Gastrocnemius medialis (tissue), 4 donors: ENCODE measurements at regions of chr18 and their contacts with region 1.

Region 1: DNA sequence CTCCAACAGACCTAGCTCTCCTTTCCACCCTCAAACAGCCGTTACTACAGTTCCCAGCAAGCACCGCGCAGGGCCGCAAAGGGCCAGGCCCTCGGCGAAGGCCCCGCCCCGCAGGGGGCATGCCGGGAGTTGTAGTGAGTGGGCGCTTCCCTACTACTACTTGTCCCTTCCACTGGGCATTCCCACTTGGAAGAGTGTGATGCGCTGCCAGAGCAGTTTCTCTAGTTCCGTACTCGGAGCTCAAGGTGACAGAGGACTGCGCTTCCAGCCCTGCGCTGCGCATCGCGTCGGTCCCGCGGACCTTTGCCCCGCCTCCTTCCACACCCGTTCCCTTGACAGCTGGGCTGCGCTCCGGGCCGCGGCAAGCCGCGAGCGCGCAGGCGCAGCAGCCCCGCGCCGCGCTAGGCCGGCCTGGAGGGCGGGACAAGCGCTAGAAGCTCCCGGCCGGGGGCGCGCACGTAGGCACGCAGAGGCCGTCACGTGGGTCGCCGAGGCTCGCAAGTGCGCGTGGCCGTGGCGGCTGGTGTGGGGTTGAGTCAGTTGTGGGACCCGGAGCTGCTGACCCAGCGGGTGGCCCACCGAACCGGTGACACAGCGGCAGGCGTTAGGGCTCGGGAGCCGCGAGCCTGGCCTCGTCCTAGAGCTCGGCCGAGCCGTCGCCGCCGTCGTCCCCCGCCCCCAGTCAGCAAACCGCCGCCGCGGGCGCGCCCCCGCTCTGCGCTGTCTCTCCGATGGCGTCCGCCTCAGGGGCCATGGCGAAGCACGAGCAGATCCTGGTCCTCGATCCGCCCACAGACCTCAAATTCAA is at the start of gene VAPA:
- DNase-seq: peak; percentile 91 to 94
- ATAC-seq: peak; percentile 84 to 87
- H3K4me3 ChIP-seq: peak within 1 kb of the TSS; percentile 68 to 95 (median 85)
- H3K27ac ChIP-seq: peak within 1 kb of the TSS; percentile 92 to 99 (median 97)
- H3K4me1 ChIP-seq: peaks cover 38 to 40% of the 10 kb centered on the region in 2 donors
- H3K27me3 ChIP-seq: no peaks in the 10 kb centered on the region
- CTCF ChIP-seq: no peak
- POLR2A ChIP-seq: peak; percentile 99
- total RNA-seq, gene VAPA: 227 to 320 (median 243) TPM

Region 2: GRCh38 chr18:9102508-9103375 is 811.0 kb before region 1 on chr18 and contains the start of gene NDUFV2:
- in situ Hi-C with region 1: no loop called
- intact Hi-C with region 1: loop called (anchors 2 kb)
- DNase-seq: peak; percentile 95 to 96
- ATAC-seq: peak; percentile 89 to 93
- H3K4me3 ChIP-seq: peak within 1 kb of the TSS; percentile 73 to 89 (median 82)
- H3K27ac ChIP-seq: peak within 1 kb of the TSS; percentile 93 to 98 (median 96)
- H3K4me1 ChIP-seq: peaks cover 42 to 47% of the 10 kb centered on the region in 2 donors
- H3K27me3 ChIP-seq: no peaks in the 10 kb centered on the region
- CTCF ChIP-seq: no peak
- POLR2A ChIP-seq: peak; percentile 92
- total RNA-seq, gene NDUFV2: 251 to 386 (median 277) TPM

Region 3: GRCh38 chr18:9474983-9475642 is 438.6 kb before region 1 on chr18 and contains the start of gene RALBP1:
- in situ Hi-C with region 1: no loop called
- intact Hi-C with region 1: loop called (anchors 10 kb)
- DNase-seq: peak; percentile 98 to 99
- ATAC-seq: peak; percentile 94 to 95
- H3K4me3 ChIP-seq: peak within 1 kb of the TSS; percentile 72 to 94 (median 88)
- H3K27ac ChIP-seq: peak within 1 kb of the TSS; percentile 84 to 98 (median 91)
- H3K4me1 ChIP-seq: peaks cover 13 to 21% of the 10 kb centered on the region in 2 donors
- H3K27me3 ChIP-seq: no peaks in the 10 kb centered on the region
- CTCF ChIP-seq: peak in 2 of 5 experiments; percentile 23 to 36
- POLR2A ChIP-seq: peak; percentile 74 to 94
- total RNA-seq, gene RALBP1: 41.5 to 108 (median 78.1) TPM

Region 4: DNA sequence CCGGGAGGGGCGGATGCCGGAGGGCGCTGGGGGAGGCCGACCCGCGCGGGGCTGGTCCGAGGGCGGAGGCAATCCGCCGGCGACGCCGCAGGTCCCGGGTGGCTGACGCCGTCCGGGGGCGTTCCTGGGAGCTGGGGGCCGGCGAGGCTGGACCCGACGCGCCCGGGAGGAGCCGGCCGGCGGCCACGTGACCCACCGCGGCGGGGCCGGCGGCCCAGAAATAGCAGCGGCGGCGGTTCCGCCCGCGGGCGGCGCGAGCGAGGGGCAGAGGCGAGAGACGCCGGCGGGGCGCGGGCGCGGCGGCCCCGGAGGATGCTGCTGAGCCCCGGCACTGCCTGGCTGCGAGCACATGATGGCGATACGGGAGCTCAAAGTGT is 205.7 kb before region 1 on chr18 and contains the start of gene RAB31:
- in situ Hi-C with region 1: no loop called
- intact Hi-C with region 1: loop called (anchors 5 kb)
- DNase-seq: peak in 1 of 2 donors; percentile 54
- ATAC-seq: peak; percentile 69 to 72
- H3K4me3 ChIP-seq: peak within 1 kb of the TSS; percentile 64 to 85 (median 71)
- H3K27ac ChIP-seq: peak within 1 kb of the TSS; percentile 63 to 85 (median 72)
- H3K4me1 ChIP-seq: peaks cover 8 to 9% of the 10 kb centered on the region in 2 donors
- H3K27me3 ChIP-seq: peaks cover 18 to 21% (median 18%) of the 10 kb centered on the region in 3 donors
- CTCF ChIP-seq: no peak
- POLR2A ChIP-seq: peak; percentile 44 to 58
- total RNA-seq, gene RAB31: 3.2 to 7.1 (median 4.4) TPM

Region 5: DNA sequence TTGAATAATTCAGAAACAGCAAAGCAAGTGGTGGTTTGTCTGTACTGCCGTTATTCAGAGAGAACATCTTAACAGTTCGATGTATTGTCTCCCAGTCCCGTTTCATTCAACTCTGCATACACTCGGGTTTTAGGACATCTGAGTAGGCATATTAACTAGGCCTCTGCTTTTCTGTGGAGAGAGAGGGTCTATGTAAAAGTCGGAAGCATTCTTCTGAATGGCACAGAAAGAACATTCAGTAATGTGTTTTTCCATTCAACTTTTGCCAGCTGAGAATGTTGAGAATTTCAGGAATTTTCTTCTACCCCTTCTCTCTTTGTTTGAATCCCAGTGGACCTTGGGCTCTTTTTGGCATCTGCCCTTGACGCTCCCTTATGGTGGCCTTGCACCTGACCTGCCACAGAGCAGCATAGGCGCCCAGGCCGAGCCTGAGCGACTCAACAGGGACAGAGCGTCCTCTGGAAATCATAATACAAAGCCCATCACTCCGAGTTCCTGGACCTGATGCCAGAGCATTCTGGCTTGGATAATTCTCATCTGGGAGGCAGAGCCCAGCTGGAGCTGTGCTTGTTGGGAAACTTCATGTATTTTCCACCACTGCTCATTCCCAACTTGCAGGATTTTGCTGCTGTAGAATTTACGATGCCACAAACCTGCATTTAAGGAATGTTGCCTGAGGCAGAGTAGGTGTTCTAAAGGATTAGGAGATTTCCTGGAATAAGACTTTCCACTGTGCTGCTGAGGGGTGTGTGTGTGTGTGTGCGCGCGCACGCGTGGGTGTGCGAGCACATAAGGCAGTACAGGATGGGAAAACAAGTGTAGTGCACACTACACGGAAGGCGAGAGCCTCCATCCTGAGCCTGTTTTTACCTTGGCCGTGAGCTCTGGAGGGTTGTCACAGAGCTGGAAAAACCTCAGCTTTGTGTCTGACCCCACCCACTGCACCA is 105.2 kb before region 1 on chr18:
- in situ Hi-C with region 1: loop called in 2 of 4 experiments (anchors 25 kb)
- intact Hi-C with region 1: no loop called
- DNase-seq: peak in 1 of 2 donors; percentile 42
- ATAC-seq: peak; percentile 15 to 59
- H3K4me3 ChIP-seq: no peak overlapping the region
- H3K27ac ChIP-seq: peak overlapping the region in 3 of 4 donors; percentile 31 to 35 (median 34)
- H3K4me1 ChIP-seq: peaks cover 35 to 51% of the 10 kb centered on the region in 2 donors
- H3K27me3 ChIP-seq: no peaks in the 10 kb centered on the region
- CTCF ChIP-seq: no peak
- POLR2A ChIP-seq: no peak

Region 6: DNA sequence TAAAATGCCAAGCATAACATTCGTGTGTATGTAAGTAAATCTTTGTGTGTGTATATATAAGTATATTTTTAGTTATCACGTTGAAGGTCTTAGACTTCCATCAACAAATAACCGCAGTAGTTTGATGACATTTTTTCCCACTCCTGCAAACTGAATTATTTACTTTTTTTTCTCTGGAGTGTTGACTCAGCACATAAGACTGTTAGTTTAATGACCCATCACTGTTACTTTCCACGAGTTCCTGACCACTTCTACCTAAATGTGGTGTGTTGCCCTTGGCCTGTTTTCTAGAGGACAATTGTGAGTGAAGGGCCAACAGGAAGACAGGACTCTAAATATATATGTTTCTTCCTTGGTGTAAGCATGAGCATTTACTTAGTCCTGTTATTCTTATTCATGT is 99.3 kb before region 1 on chr18:
- in situ Hi-C with region 1: loop called in 2 of 4 experiments (anchors 25 kb)
- intact Hi-C with region 1: loop called (anchors 5 kb)
- DNase-seq: no peak
- ATAC-seq: no peak
- H3K4me3 ChIP-seq: no peak overlapping the region
- H3K27ac ChIP-seq: no peak overlapping the region
- H3K4me1 ChIP-seq: peaks cover 51 to 59% of the 10 kb centered on the region in 2 donors
- H3K27me3 ChIP-seq: no peaks in the 10 kb centered on the region
- CTCF ChIP-seq: no peak
- POLR2A ChIP-seq: no peak

Region 7: DNA sequence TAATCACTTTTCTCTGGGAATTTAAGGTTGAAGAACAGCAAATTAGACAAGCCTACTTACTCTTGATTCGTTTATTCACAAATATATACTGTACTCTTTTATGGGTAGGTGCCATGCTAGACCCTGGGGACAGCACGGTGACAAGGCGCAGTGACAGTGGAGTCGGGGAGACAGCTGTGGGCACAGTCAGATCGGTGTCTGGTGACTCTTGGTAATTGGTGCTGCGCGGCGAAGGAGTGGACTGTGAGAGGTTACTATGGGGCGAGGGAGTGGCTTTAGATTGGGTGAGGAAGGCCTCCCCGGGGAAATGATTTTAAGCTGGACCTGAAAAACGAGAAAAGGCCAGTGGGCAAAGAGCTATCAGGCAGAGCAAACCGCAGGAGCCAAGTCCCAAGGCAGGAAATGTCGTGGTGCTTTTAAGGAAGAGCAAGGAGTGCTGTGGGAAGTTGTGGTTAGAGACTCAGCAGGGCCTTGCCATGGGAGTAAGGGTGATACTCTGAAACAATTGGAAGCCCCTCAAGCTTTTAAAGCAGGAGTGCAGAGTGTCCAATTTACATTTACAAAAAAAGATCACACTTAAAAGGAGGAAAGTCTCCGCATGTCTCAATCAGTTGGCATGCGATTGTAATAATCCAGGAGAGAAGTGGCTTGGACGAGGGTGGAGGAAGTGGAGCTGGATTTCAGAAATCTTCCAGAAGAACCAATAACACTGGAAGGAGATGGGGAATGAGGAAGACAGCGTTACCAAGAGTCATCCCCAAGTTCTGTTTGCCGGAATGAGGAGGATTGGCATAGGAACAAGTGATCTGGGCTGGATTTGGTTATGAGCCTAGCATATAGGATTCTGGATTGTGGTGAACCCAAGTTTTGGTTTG is 64.1 kb before region 1 on chr18:
- in situ Hi-C with region 1: no loop called
- intact Hi-C with region 1: loop called (anchors 1 kb)
- DNase-seq: peak; percentile 86 to 93
- ATAC-seq: peak; percentile 97 to 98
- H3K4me3 ChIP-seq: peak overlapping the region; percentile 5 to 44 (median 36)
- H3K27ac ChIP-seq: peak overlapping the region; percentile 83 to 90 (median 84)
- H3K4me1 ChIP-seq: peaks cover 36% of the 10 kb centered on the region in 2 donors
- H3K27me3 ChIP-seq: no peaks in the 10 kb centered on the region
- CTCF ChIP-seq: no peak
- POLR2A ChIP-seq: peak; percentile 50 to 59

Region 8: DNA sequence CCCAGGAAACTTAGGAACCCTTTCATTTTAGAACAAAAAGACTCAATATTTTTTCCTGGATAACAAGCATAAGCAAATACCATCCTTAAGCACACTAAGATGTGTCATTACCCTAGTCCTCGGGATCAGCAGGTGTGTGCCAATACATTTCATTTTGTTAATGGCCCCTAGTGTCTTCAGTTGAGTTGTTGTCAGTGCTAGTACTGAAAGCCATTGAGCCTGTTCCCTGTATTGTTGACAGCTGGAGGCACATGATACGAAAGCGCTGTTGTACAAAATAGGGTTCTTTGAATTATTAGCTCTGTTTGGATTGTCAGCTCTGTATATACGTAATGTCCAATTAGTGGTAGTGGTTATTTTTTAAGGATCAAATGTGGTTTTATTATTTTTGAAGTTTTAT is 29.6 kb after region 1 on chr18:
- in situ Hi-C with region 1: no loop called
- intact Hi-C with region 1: no loop called
- DNase-seq: no peak
- ATAC-seq: peak in 1 of 2 donors; percentile 54
- H3K4me3 ChIP-seq: no peak overlapping the region
- H3K27ac ChIP-seq: no peak overlapping the region
- H3K4me1 ChIP-seq: no peaks in the 10 kb centered on the region
- H3K27me3 ChIP-seq: no peaks in the 10 kb centered on the region
- CTCF ChIP-seq: no peak
- POLR2A ChIP-seq: no peak

Region 9: DNA sequence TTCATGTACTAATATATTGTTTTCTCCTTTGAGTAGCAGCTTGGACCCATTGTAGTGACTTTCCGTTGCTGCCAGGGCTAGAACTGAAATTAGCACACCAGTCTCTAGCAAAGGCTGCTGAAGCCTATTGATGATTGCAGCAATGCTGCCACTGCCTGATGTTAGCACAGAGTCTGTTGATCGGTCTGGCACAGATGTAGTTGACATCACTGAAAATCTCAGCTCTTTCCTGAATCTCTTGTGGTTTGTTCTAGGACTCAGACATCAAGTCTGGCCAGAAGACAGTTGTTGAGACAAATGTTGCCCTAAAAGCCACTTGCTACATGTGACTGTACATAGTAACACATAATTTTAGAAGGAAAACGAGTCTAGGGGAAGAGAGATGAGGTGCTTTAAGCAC is 47.3 kb after region 1 on chr18:
- in situ Hi-C with region 1: no loop called
- intact Hi-C with region 1: no loop called
- DNase-seq: no peak
- ATAC-seq: peak; percentile 17 to 31
- H3K4me3 ChIP-seq: no peak overlapping the region
- H3K27ac ChIP-seq: no peak overlapping the region
- H3K4me1 ChIP-seq: no peaks in the 10 kb centered on the region
- H3K27me3 ChIP-seq: no peaks in the 10 kb centered on the region
- CTCF ChIP-seq: no peak
- POLR2A ChIP-seq: no peak